ENCODE measurements at regions of chr1 and their contacts with region 1.

Region 1: GRCh38 chr1:204503122-204503912 is 8.7 kb upstream of the PIK3C2B start:
- DNase-seq: no peak
- ATAC-seq: no peak

Region 2: GRCh38 chr1:204314171-204314895 is 189.0 kb before region 1 on chr1:
- intact Hi-C with region 1: no loop called
- DNase-seq: no peak
- ATAC-seq: no peak

Region 3: DNA sequence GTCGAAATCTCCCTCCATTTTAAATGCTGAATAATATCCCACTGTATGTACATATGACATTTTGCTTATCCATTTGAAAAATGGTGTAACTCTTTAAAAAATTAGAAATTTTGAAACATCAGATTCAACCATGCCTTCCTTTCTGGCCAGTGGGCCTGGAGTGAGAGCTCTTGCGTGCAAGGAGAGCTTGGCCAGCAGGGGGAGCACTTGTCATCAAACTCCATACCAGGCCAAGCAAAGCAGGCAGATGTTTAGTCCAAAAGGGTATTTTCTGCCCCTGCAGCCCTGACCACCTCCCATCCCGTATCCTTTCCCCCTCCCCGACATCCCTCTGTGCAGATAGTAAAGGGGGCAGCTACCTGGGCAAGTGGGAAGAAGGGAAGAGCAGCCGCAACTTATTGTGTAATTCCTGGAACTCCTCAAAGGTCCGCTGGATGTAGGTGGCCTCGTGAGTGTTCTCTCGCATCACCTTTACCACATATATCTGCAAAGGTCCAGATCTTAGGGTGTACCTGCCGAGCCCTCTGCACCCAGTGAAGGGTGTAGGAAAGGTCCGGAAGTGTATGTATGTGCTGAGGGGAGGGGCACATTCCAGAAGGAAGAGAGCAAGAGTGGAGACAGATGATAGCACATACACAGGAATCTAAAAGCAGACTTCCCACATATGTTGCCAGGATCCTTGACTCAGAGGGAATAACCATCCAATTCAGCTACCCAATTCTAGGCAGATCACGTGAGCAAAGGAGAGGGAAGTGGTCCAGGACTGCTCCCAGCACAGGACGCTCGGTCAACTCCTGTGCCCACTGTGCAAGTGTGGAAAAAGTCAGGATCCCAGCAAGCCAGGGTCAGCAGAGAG is 71.8 kb before region 1 on chr1:
- intact Hi-C with region 1: loop called (anchors 5 kb)
- DNase-seq: peak; percentile 90
- ATAC-seq: peak; percentile 71

Region 4: GRCh38 chr1:204446370-204447111 is 56.8 kb before region 1 on chr1:
- intact Hi-C with region 1: loop called (anchors 2 kb)
- DNase-seq: peak; percentile 84
- ATAC-seq: peak; percentile 71